Activated T-helper 1 cell treated with anti-CD3 and anti-CD28 coated beads, Interleukin-12 subunit alpha, Interleukin-12 subunit beta, Interleukin-2, Interleukin-4 antibody, amounts not matched to agents 30 ng/mL and 10 ng/mL and 1 ng/mL, durations not matched to agents 14 hours and 24 hours and 36 hours (primary cell): ENCODE measurements at regions of chr13 and their contacts with region 1.

Region 1: GRCh38 chr13:50594276-50595051 is 249.0 kb downstream of the DLEU7 start:
- DNase-seq: no peak
- H3K4me3 Mint-ChIP-seq: peak overlapping the region; percentile 12
- H3K27ac Mint-ChIP-seq: peak overlapping the region; percentile 10
- H3K4me1 Mint-ChIP-seq: peaks cover 32% of the 10 kb centered on the region
- H3K27me3 Mint-ChIP-seq: peaks cover 4% of the 10 kb centered on the region

Region 2: GRCh38 chr13:50611117-50611781 is 16.8 kb after region 1 on chr13:
- intact Hi-C with region 1: loop called (anchors 2 kb)
- DNase-seq: peak; percentile 9
- H3K4me3 Mint-ChIP-seq: no peak overlapping the region
- H3K27ac Mint-ChIP-seq: no peak overlapping the region
- H3K4me1 Mint-ChIP-seq: peaks cover 11% of the 10 kb centered on the region
- H3K27me3 Mint-ChIP-seq: peaks cover 20% of the 10 kb centered on the region